A549 (cell line): ENCODE measurements at regions of chr2 and their contacts with region 1.

Region 1: DNA sequence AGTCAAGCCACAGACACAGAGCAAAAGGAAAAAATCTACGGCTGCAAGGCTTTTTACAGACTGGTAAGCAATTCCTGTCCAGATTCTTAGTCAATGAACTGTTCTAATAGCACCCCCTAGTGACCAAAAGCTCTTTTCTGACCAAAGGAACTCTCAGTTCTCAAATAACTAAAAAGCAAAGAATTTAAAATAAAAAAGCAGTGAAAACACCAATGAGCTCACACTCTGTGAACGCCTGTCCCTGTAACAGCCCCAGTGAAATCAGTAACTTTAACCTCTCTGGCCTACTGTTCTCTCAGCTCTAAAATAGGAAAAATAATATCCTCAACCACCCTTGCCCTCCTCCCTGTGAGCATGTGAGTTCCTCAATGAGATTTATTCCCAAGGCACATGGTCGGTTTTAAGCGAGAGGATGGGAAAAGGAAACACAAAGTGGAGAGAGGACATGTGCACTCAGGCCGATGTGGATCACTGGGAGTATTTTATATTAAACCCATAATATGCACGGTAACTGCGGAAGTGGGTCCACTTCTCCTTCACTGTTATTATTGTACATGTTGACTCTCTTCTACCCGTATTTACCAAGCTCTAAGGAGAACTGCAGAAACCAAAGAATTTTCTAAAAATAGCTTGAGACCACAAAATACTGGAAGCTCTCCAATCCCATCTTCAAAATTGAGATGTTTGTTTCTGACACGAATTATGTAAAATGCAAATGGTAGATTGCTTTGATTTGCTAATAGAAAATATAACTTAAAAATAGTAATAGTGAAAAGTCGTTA is 128.5 kb downstream of the STK39 start:
- DNase-seq: peak; percentile 4 to 64
- ATAC-seq: peak; percentile 76 to 91; a peak in 4 of 6 replicates
- H3K4me3 ChIP-seq: no peak overlapping the region
- H3K27ac ChIP-seq: no peak overlapping the region
- H3K4me1 ChIP-seq: no peaks in the 10 kb centered on the region
- CTCF ChIP-seq: peak; percentile 74
- EP300 ChIP-seq: no peak
- POLR2A ChIP-seq: no peak
- RAD21 ChIP-seq: peak; percentile 69 to 74

Region 2: GRCh38 chr2:166539340-166540162 is 1579.4 kb before region 1 on chr2:
- CTCF ChIA-PET with region 1: interaction called, 15 read pairs
- POLR2A ChIA-PET with region 1: no interaction called
- DNase-seq: peak; percentile 7 to 62
- ATAC-seq: peak; percentile 86 to 95
- H3K4me3 ChIP-seq: no peak overlapping the region
- H3K27ac ChIP-seq: no peak overlapping the region
- H3K4me1 ChIP-seq: no peaks in the 10 kb centered on the region
- CTCF ChIP-seq: peak; percentile 84
- EP300 ChIP-seq: no peak
- POLR2A ChIP-seq: no peak
- RAD21 ChIP-seq: peak; percentile 83 to 91

Region 3: GRCh38 chr2:168084327-168084726 is 34.6 kb before region 1 on chr2:
- CTCF ChIA-PET with region 1: interaction called, 11 read pairs
- POLR2A ChIA-PET with region 1: no interaction called
- DNase-seq: no peak
- ATAC-seq: no peak
- H3K4me3 ChIP-seq: no peak overlapping the region
- H3K27ac ChIP-seq: no peak overlapping the region
- H3K4me1 ChIP-seq: no peaks in the 10 kb centered on the region
- CTCF ChIP-seq: no peak
- EP300 ChIP-seq: no peak
- POLR2A ChIP-seq: no peak
- RAD21 ChIP-seq: no peak

Region 4: DNA sequence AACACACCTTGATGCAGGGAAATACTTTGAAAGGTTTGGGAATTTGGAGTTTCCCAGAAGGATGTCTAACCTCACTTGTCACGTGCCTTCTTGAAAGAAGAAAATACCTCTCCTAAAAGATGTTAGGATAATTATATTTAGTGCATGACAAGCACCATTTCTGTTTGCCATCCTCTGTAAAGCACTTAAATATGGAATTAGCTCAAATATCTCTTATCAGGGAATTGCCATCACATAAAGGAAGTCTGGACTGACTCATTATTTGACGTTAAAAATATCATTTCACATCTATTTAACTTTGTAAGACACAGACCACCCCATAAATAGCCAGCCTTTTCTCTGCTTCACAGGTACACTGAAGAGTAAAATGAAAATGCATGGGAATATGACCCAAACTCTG is 11.6 kb before region 1 on chr2:
- CTCF ChIA-PET with region 1: interaction called, 22 read pairs
- POLR2A ChIA-PET with region 1: no interaction called
- DNase-seq: no peak
- ATAC-seq: no peak
- H3K4me3 ChIP-seq: no peak overlapping the region
- H3K27ac ChIP-seq: no peak overlapping the region
- H3K4me1 ChIP-seq: no peaks in the 10 kb centered on the region
- CTCF ChIP-seq: no peak
- EP300 ChIP-seq: no peak
- POLR2A ChIP-seq: no peak
- RAD21 ChIP-seq: no peak

Region 5: DNA sequence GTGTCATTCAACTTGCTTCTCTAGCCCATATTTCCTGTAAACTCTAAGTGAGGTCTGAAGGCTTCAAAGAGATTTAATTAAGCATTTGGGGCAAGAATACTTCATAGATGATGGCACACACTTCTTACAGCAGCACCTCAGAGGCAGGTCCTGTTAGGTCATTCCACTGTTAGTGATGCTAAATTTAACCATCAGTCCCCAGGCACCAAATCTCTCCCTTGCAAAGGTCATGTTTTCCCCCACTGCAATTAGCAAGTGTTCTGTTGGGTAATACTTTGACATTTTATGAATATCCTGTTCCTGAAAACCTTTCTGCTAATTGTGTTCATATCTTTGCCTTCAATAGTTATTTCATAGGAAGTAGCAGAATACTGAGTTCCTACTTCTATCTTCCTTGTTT is 11.4 kb after region 1 on chr2:
- CTCF ChIA-PET with region 1: interaction called, 37 read pairs
- POLR2A ChIA-PET with region 1: no interaction called
- DNase-seq: no peak
- ATAC-seq: no peak
- H3K4me3 ChIP-seq: no peak overlapping the region
- H3K27ac ChIP-seq: no peak overlapping the region
- H3K4me1 ChIP-seq: peaks cover 4% of the 10 kb centered on the region
- CTCF ChIP-seq: no peak
- EP300 ChIP-seq: no peak
- POLR2A ChIP-seq: no peak
- RAD21 ChIP-seq: no peak